Heart left ventricle (tissue), 16 donors: ENCODE measurements at regions of chr1 and their contacts with region 1.

Region 1: DNA sequence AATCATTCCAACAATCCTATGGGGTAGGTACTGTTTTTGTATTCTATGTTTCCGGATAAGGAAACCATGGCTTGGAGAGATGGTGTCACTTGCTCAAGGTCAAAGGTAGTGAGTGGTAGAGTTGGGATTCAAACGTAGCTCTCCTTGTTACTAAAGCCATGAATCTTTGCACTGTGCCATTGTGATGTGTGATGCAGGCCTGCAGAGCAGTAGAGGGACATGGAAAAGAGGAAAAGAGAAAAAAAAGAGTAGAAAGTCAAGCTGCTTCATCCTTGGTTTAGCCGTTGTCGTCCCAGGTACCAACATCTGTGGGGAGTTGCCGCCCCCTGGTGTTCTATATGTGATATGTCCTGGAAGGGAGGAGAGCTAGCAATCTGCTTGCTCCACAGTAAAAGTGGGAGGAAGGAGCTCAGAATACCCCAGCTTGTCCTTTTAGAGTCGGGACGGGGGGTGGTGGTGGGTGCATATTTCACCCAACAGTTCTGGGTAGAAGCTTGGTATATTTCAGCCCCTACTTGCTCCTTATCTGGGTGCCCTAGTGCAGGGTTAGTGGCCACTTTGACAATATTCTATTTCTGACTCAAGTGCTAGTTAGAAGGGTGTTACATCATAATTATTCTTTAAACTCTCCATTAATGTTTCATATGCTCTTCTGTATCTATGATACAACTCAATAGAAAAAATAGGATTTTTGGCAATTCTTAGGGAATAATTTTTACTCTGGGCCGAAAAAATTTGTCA is 98.4 kb downstream of the EBNA1BP2 start:
- DNase-seq: peak in 4 of 5 donors; percentile 64 to 78 (median 68)
- ATAC-seq: peak; percentile 68 to 91 (median 88)
- H3K4me3 ChIP-seq: no peak overlapping the region
- H3K27ac ChIP-seq: peak overlapping the region in 2 of 12 donors; percentile 40 to 44
- H3K4me1 ChIP-seq: peaks cover 0 to 9% (median 0%) of the 10 kb centered on the region in 12 donors
- H3K27me3 ChIP-seq: peaks cover 0 to 2% (median 0%) of the 10 kb centered on the region in 9 donors
- CTCF ChIP-seq: peak; percentile 69 to 93 (median 84)
- POLR2A ChIP-seq: no peak

Region 2: DNA sequence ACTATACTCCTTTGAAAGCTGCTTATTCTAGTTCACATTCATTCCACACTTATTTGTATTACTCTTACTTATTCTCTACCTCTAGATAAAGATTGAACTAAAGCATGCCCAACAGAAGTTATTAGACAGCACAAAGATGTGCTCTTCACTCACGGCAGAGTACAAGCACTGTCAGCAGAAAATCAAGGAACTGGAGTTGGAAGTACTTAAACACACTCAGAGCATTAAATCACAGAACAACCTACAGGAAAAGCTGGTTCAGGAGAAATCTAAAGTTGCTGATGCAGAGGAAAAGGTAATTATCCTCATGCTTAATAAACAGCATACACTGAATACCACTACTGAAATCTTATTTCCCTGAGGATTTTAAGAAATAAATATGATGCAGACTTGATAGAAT is 496.7 kb before region 1 on chr1:
- intact Hi-C with region 1: loop called in 6 of 10 experiments (anchors 5 to 10 kb)
- DNase-seq: no peak
- ATAC-seq: no peak
- H3K4me3 ChIP-seq: no peak overlapping the region
- H3K27ac ChIP-seq: no peak overlapping the region
- H3K4me1 ChIP-seq: no peaks in the 10 kb centered on the region
- H3K27me3 ChIP-seq: no peaks in the 10 kb centered on the region
- CTCF ChIP-seq: no peak
- POLR2A ChIP-seq: no peak

Region 3: DNA sequence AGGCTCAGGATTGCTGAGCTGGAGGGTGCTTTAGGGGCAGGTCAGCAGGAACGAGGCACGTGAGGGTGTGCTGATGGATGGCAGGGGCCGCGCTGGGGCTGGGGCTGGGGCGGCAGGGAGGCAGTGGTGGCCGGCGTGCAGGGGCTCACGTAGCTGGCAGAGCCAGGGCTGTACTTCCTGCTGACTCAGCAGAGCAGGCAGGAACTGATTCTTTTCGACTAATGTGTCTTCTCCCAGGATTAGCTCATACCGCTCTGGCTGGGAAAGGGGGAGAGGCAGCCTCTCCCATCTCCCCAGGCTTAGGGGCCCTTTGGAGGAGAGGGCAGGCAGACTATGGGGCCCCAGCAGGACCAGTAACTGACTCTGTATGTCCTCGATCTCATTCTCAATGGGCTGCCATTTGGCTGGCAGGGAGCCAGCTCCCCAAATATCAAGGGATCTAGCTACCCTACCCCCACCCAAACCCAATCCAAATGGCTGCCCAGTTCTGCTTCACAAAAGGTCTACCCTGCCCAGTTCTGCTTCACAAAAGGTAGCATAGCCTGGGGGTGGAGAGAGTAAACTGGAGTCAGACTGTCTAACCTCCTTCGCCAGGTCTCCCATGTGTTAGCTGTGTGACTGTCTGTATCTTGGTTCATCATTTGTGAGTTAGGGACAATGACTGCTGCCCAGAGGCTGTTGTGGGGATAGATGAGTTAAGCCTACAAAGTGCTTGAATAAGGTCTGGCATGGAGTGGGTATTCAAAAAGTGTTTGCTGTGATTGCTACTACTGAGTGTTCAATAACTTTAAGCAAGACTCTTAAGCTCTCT is 14.9 kb before region 1 on chr1:
- intact Hi-C with region 1: no loop called
- DNase-seq: no peak
- ATAC-seq: peak in 3 of 4 donors; percentile 27 to 29 (median 28)
- H3K4me3 ChIP-seq: no peak overlapping the region
- H3K27ac ChIP-seq: no peak overlapping the region
- H3K4me1 ChIP-seq: peaks cover 0 to 8% (median 1%) of the 10 kb centered on the region in 12 donors
- H3K27me3 ChIP-seq: peaks cover 0 to 7% (median 0%) of the 10 kb centered on the region in 9 donors
- CTCF ChIP-seq: no peak
- POLR2A ChIP-seq: no peak